ENCODE measurements at regions of chr13 and their contacts with region 1.

Region 1: DNA sequence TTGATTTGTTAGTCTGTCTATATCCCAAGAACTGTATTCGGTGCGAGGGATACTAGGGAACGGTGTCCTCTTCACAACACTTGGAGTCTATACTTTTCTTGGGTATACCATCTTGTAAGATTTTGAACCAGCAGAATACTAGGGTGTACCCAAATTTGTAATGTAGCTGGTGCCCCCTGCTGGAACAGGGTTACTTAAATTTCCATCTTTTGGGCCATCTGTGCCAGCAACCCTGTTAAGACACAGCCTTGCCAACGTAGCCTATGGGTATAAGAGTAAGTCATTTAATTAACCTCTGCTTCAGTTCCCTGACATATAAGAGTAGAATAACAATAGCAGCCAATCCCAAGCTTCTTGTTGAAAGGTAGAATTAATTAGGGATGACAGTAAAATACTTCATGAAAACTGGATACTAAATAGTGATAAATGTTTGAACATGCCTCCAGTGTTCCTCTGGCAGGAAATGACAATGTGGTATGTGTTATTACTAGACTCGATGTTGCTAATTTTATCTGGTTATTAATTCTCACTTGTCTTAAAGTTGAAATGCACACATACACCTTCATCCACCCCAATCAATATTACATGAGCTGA is 607.6 kb downstream of the FGF9 start:
- DNase-seq: no peak
- H3K4me3 ChIP-seq: no peak overlapping the region
- H3K27ac ChIP-seq: no peak overlapping the region
- H3K4me1 ChIP-seq: no peaks in the 10 kb centered on the region
- H3K27me3 ChIP-seq: no peaks in the 10 kb centered on the region
- CTCF ChIP-seq: peak in 3 of 4 experiments; percentile 26 to 40 (median 40)
- EP300 ChIP-seq: no peak
- POLR2A ChIP-seq: no peak

Region 2: GRCh38 chr13:21458451-21458812 is 820.0 kb before region 1 on chr13:
- intact Hi-C with region 1: no loop called
- DNase-seq: no peak
- H3K4me3 ChIP-seq: peak overlapping the region; percentile 87 to 95 (median 92)
- H3K27ac ChIP-seq: peak overlapping the region; percentile 92 to 93 (median 92)
- H3K4me1 ChIP-seq: peaks cover 0 to 17% (median 14%) of the 10 kb centered on the region in 4 donors
- H3K27me3 ChIP-seq: no peaks in the 10 kb centered on the region
- CTCF ChIP-seq: no peak
- EP300 ChIP-seq: no peak
- POLR2A ChIP-seq: no peak

Region 3: GRCh38 chr13:21638319-21639282 is 639.8 kb before region 1 on chr13:
- intact Hi-C with region 1: loop called (anchors 2 kb)
- DNase-seq: no peak
- H3K4me3 ChIP-seq: no peak overlapping the region
- H3K27ac ChIP-seq: no peak overlapping the region
- H3K4me1 ChIP-seq: no peaks in the 10 kb centered on the region
- H3K27me3 ChIP-seq: peaks cover 0 to 8% (median 0%) of the 10 kb centered on the region in 3 donors
- CTCF ChIP-seq: peak in 3 of 4 experiments; percentile 38 to 77 (median 73)
- EP300 ChIP-seq: no peak
- POLR2A ChIP-seq: no peak

Region 4: GRCh38 chr13:22468045-22468444 is 189.6 kb after region 1 on chr13:
- intact Hi-C with region 1: no loop called
- DNase-seq: no peak
- H3K4me3 ChIP-seq: no peak overlapping the region
- H3K27ac ChIP-seq: no peak overlapping the region
- H3K4me1 ChIP-seq: no peaks in the 10 kb centered on the region
- H3K27me3 ChIP-seq: no peaks in the 10 kb centered on the region
- CTCF ChIP-seq: no peak
- EP300 ChIP-seq: no peak
- POLR2A ChIP-seq: no peak